ENCODE measurements at regions of chr9 and their contacts with region 1.

Region 1: GRCh38 chr9:134641173-134641985 is at the start of gene COL5A1:
- DNase-seq: no peak
- H3K4me3 Mint-ChIP-seq: no peak within 1 kb of the TSS
- H3K27ac Mint-ChIP-seq: no peak within 1 kb of the TSS
- H3K4me1 Mint-ChIP-seq: no peaks in the 10 kb centered on the region
- H3K27me3 Mint-ChIP-seq: peaks cover 14% of the 10 kb centered on the region
- CTCF ChIP-seq: no peak
- total RNA-seq, gene COL5A1: not detected in 2 replicates

Region 2: DNA sequence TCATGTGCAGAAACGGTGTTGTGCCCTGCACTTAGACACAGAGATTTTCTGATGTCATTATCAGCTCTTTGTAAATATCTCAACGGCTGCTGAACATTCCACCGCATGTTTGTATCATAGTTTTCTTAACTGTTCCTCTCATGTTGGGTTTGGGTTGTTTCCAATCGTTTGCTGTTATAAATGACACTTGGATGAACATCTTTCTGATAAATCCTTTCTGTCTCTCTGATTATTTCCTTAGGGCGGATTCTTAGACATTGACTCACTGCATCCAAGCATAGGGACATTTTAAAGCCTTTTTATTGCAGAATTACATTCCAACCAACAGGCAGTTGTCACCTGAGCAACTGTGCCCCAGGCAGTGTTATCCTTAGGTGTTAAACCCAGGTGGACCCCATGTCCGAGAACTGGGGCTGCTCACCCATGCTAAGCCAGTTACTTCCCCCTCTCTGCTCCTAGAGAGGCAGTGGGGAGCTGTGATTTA is 28.7 kb after region 1 on chr9:
- CTCF ChIA-PET with region 1: interaction called, 11 read pairs
- intact Hi-C with region 1: no loop called
- DNase-seq: no peak
- H3K4me3 Mint-ChIP-seq: no peak overlapping the region
- H3K27ac Mint-ChIP-seq: no peak overlapping the region
- H3K4me1 Mint-ChIP-seq: no peaks in the 10 kb centered on the region
- H3K27me3 Mint-ChIP-seq: peaks cover 21% of the 10 kb centered on the region
- CTCF ChIP-seq: no peak

Region 3: GRCh38 chr9:134725605-134725940 is 84.2 kb after region 1 on chr9:
- CTCF ChIA-PET with region 1: no interaction called
- intact Hi-C with region 1: no loop called
- DNase-seq: no peak
- H3K4me3 Mint-ChIP-seq: no peak overlapping the region
- H3K27ac Mint-ChIP-seq: no peak overlapping the region
- H3K4me1 Mint-ChIP-seq: no peaks in the 10 kb centered on the region
- H3K27me3 Mint-ChIP-seq: peaks cover 12% of the 10 kb centered on the region
- CTCF ChIP-seq: no peak

Measured in Calu3 (cell line).